ENCODE measurements at regions of chr19 and their contacts with region 1.

Region 1: DNA sequence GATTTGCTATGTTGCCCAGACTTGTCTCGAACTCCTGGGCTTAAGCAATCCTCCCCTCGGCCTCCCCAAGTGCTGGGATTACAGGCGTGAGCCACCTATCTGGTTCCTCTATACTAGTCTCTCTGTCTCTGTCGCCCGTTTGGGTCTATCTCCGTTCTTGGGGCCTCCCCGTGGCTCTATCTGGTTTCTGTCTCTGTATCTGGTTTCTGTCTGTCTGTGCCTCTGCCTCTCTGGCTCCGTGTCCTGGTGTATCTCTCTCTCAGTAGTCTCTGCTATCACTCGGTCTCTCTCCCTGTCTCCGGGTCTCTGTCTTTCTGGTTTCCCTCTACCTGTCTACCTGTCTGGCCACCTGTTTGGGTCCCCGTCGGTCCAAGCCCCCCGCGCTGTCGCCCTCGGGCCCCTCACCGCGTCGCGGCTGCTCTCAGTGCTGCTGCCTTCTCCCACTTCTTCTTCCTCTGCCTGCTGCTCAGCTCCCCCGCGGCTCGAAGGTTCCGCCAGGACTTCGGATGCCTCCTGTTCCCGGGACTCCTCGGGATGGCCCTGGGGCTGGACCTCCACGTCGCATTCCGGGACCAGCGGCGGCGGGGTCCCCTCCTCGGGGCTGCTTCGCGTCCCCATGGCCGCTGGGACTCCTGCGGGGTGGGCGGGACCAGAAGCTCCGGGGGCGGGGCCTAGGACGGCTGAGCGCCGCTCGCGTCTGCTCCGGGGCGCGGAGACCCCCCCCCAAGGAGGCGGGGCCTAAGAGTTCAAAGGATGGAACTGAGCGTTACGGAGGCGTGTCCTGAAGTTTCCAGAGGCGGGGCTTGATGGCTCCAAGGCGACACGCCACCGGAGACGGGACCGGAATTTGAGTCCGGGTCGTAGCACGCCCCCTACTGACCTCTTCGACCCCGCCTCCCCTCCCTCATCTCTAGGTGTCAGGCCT is 783 bp downstream of the PHLDB3 start:
- DNase-seq: peak in 1 of 2 donors; percentile 95
- H3K4me3 ChIP-seq: peak overlapping the region; percentile 81 to 87
- H3K27ac ChIP-seq: peak overlapping the region; percentile 91
- H3K4me1 ChIP-seq: peaks cover 39% of the 10 kb centered on the region
- H3K27me3 ChIP-seq: no peaks in the 10 kb centered on the region
- CTCF ChIP-seq: peak in 1 of 3 experiments; percentile 48
- POLR2A ChIP-seq: peak in 1 of 2 donors; percentile 32

Region 2: GRCh38 chr19:43463381-43464136 is 40.2 kb before region 1 on chr19:
- intact Hi-C with region 1: loop called (anchors 5 kb)
- DNase-seq: peak; percentile 98 to 99
- H3K4me3 ChIP-seq: peak overlapping the region; percentile 61 to 70
- H3K27ac ChIP-seq: peak overlapping the region; percentile 90
- H3K4me1 ChIP-seq: peaks cover 20% of the 10 kb centered on the region
- H3K27me3 ChIP-seq: no peaks in the 10 kb centered on the region
- CTCF ChIP-seq: no peak
- POLR2A ChIP-seq: peak in 1 of 2 donors; percentile 63

Region 3: DNA sequence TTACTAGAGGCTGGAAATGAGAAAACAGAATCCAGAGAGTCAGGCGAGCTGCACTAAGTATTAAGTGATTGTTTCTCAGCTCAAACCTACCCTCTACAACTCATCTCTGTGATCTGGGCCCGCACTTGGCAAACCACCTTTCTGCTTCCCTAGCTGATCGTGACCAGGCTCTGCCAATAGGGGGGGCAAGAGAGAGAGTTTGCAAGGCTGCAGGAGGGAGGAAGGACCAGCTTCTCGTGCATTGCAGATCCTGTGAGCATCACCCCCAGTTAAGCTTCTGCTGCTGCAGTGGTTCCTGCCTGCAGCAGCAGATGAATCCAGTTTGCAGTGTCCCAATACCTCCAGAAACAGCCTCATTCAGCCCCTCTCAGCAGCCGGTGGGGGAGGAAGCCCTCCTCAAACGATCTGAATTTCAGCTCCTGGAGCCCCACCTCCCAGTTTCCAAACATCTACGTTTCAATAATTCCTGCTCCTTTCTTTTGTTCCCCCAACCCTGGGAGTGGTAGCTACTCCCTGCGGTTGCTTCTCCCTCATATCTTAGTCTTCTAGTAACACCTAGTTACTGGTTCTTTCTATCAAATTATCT is 51.5 kb after region 1 on chr19:
- intact Hi-C with region 1: no loop called
- DNase-seq: no peak
- H3K4me3 ChIP-seq: no peak overlapping the region
- H3K27ac ChIP-seq: no peak overlapping the region
- H3K4me1 ChIP-seq: no peaks in the 10 kb centered on the region
- H3K27me3 ChIP-seq: no peaks in the 10 kb centered on the region
- CTCF ChIP-seq: peak in 1 of 3 experiments; percentile 23
- POLR2A ChIP-seq: no peak

Measured in vagina (tissue), 2 donors.